A673 (cell line): ENCODE measurements at regions of chr1 and their contacts with region 1.

Region 1: GRCh38 chr1:150249936-150250335 is 7.6 kb upstream of the CA14 start:
- DNase-seq: no peak
- H3K4me3 ChIP-seq: no peak overlapping the region
- H3K27ac ChIP-seq: no peak overlapping the region
- H3K4me1 ChIP-seq: no peaks in the 10 kb centered on the region
- H3K27me3 ChIP-seq: no peaks in the 10 kb centered on the region
- CTCF ChIP-seq: no peak

Region 2: DNA sequence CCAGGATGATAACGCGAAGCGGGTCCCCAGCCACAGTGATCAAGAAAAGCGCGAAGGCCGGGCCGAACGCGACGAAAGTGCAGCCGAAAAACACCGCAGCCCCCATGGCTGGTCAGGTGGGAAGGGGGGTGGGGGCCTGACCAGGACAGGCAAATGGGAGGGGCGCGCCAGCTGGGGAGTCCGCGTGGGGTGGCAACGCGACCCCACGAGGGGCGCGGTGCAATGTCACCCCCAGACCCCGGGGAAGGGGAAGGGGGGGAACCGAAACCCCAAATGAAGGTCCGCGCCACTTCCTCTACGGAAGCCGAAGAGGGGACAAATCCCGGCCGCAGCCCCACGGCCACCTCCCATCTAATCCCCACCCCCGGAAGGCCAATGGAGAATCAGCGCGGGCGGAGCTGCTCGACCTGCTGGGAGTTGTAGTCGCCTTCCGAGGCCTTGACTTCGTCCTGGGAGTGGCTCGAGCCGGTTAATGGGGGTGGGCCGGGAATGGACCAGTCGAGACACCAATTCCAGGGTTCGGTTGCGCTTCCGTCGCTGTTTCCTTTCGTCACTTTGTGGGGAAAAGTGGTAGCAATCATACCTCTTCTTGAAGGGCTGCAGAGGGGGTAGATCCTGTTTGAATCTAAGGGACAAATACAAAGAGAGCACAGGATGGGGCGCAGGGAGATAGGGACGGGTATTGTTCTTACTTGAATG is 18.9 kb after region 1 on chr1 and contains the start of gene APH1A:
- CTCF ChIA-PET with region 1: no interaction called
- POLR2A ChIA-PET with region 1: interaction called, 25 read pairs
- intact Hi-C with region 1: no loop called
- DNase-seq: peak; percentile 99
- H3K4me3 ChIP-seq: peak within 1 kb of the TSS; percentile 96
- H3K27ac ChIP-seq: peak within 1 kb of the TSS; percentile 91
- H3K4me1 ChIP-seq: peaks cover 26% of the 10 kb centered on the region
- H3K27me3 ChIP-seq: no peaks in the 10 kb centered on the region
- CTCF ChIP-seq: no peak
- total RNA-seq, gene APH1A: 136 and 144 TPM in 2 replicates